H1 (cell line): ENCODE measurements at regions of chr1 and their contacts with region 1.

Region 1: GRCh38 chr1:17661546-17662157 is 93.5 kb upstream of the ACTL8 start:
- DNase-seq: peak; percentile 10 to 96
- H3K4me3 ChIP-seq: no peak overlapping the region
- H3K27ac ChIP-seq: no peak overlapping the region
- H3K4me1 ChIP-seq: peaks cover 0 to 4% (median 0%) of the 10 kb centered on the region in 4 experiments; a peak in 2 of 7 replicates
- H3K27me3 ChIP-seq: no peaks in the 10 kb centered on the region
- CTCF ChIP-seq: peak; percentile 90 to 94 (median 91)
- EP300 ChIP-seq: no peak
- POLR2A ChIP-seq: no peak
- RAD21 ChIP-seq: peak; percentile 92 to 95

Region 2: GRCh38 chr1:17393230-17393629 is 268.4 kb before region 1 on chr1:
- CTCF ChIA-PET with region 1: no interaction called
- POLR2A ChIA-PET with region 1: no interaction called
- DNase-seq: no peak
- H3K4me3 ChIP-seq: no peak overlapping the region
- H3K27ac ChIP-seq: no peak overlapping the region
- H3K4me1 ChIP-seq: no peaks in the 10 kb centered on the region
- H3K27me3 ChIP-seq: no peaks in the 10 kb centered on the region; a peak in 1 of 7 replicates
- CTCF ChIP-seq: no peak
- EP300 ChIP-seq: no peak
- POLR2A ChIP-seq: no peak
- RAD21 ChIP-seq: no peak

Region 3: GRCh38 chr1:17494114-17494729 is 167.4 kb before region 1 on chr1:
- CTCF ChIA-PET with region 1: interaction called, 11 read pairs
- POLR2A ChIA-PET with region 1: no interaction called
- DNase-seq: peak; percentile 89 to 96
- H3K4me3 ChIP-seq: no peak overlapping the region
- H3K27ac ChIP-seq: no peak overlapping the region
- H3K4me1 ChIP-seq: no peaks in the 10 kb centered on the region
- H3K27me3 ChIP-seq: no peaks in the 10 kb centered on the region
- CTCF ChIP-seq: peak; percentile 98 to 100 (median 99)
- EP300 ChIP-seq: 0 out of 3 replicates have a peak, but pooled peaks of 1 of the 2 experiments have one; percentile 40
- POLR2A ChIP-seq: no peak
- RAD21 ChIP-seq: peak; percentile 100

Region 4: DNA sequence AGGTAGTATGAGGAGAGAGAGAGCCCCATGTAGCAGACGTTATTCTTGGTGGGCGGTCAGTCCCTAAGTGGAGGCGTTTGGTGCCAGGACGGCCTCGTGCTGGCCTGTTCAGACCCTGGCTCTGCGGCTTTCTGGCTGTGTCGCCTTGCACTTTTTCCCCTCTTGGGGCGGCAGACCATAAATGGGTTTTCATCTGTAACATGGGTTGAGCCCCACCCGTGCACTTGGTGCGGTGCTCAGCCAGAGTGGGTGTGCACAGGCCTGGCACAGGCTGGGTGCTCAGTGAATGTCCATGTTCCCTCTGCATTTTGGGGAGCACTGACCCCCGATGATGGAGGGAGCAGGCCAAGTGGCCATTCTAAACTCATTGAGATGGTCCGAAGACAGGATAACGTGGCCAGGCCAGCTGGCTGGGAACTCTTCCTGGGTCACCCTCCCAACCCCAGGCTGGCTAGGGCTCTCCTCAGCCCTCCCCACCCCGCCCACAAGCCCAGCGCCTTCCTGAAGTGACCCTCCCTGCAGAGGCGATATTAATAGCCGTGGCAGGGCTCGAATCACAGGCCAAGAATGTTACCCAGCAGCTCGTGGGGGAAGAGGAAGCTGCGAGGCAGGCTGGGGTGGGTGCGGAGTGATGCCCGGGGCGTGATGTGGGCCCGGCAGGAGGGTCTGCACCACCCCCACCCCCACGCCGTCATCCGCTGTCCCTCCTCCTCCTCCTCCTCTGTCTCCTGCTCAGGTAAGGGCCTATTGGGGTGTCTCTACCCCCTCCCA is 43.7 kb before region 1 on chr1:
- CTCF ChIA-PET with region 1: interaction called, 11 read pairs
- POLR2A ChIA-PET with region 1: no interaction called
- DNase-seq: no peak
- H3K4me3 ChIP-seq: no peak overlapping the region
- H3K27ac ChIP-seq: no peak overlapping the region
- H3K4me1 ChIP-seq: no peaks in the 10 kb centered on the region
- H3K27me3 ChIP-seq: no peaks in the 10 kb centered on the region
- CTCF ChIP-seq: peak in 1 of 3 experiments; percentile 1; a peak in 1 of 4 replicates
- EP300 ChIP-seq: no peak
- POLR2A ChIP-seq: no peak
- RAD21 ChIP-seq: no peak

Region 5: GRCh38 chr1:17671741-17672140 is 10.1 kb after region 1 on chr1:
- CTCF ChIA-PET with region 1: interaction called, 20 read pairs
- POLR2A ChIA-PET with region 1: interaction called, 5 read pairs
- DNase-seq: peak in 1 of 2 experiments; percentile 61
- H3K4me3 ChIP-seq: no peak overlapping the region
- H3K27ac ChIP-seq: no peak overlapping the region
- H3K4me1 ChIP-seq: peaks cover 0 to 15% (median 7%) of the 10 kb centered on the region in 4 experiments; a peak in 5 of 7 replicates
- H3K27me3 ChIP-seq: no peaks in the 10 kb centered on the region
- CTCF ChIP-seq: peak in 2 of 3 experiments; percentile 9 to 30; a peak in 1 of 4 replicates
- EP300 ChIP-seq: no peak
- POLR2A ChIP-seq: no peak
- RAD21 ChIP-seq: no peak

Region 6: DNA sequence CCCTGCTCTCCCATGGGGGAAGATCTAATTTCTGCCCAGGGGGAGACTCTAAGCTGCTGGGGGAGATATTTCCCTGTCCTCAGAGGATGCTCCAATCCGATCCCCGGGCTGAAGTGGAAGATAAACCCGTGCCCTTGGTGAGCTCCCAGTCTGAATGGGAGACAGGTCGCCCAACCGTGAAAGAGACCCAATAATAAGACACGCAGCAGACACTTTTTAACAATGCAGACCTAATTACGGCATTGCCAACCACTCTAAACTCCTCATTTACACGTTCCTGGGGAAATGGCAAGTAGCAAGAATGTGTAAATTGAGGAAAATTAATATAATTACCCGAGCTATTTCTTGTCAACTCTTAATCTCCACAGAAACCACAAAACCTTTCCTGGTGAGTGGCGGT is 44.8 kb after region 1 on chr1:
- CTCF ChIA-PET with region 1: interaction called, 11 read pairs
- POLR2A ChIA-PET with region 1: no interaction called
- DNase-seq: no peak
- H3K4me3 ChIP-seq: no peak overlapping the region
- H3K27ac ChIP-seq: no peak overlapping the region
- H3K4me1 ChIP-seq: no peaks in the 10 kb centered on the region
- H3K27me3 ChIP-seq: peaks cover 0 to 2% (median 0%) of the 10 kb centered on the region in 4 experiments; a peak in 2 of 7 replicates
- CTCF ChIP-seq: no peak
- EP300 ChIP-seq: no peak
- POLR2A ChIP-seq: no peak
- RAD21 ChIP-seq: no peak

Region 7: DNA sequence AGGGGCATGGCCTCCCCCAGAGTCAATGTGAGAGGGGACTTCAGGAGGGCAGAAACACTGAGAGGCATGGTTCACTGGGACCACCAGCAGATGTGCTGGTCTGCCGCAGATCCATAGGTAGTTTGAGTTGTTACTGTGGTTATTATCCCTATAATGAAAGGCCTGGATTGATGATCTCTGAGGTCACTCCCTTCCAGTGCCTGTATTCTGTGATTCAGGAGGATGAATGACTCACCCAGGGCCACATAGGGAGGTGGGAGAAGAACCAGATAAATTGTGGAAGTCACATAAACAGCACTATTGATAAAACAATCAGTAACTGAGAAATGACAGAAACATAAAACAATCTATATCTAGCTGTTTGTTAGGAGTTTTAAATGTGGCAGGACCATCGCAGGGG is 70.8 kb after region 1 on chr1:
- CTCF ChIA-PET with region 1: interaction called, 16 read pairs
- POLR2A ChIA-PET with region 1: no interaction called
- DNase-seq: no peak
- H3K4me3 ChIP-seq: no peak overlapping the region
- H3K27ac ChIP-seq: no peak overlapping the region
- H3K4me1 ChIP-seq: peaks cover 0 to 7% (median 1%) of the 10 kb centered on the region in 4 experiments; a peak in 5 of 7 replicates
- H3K27me3 ChIP-seq: no peaks in the 10 kb centered on the region
- CTCF ChIP-seq: no peak
- EP300 ChIP-seq: no peak
- POLR2A ChIP-seq: no peak
- RAD21 ChIP-seq: no peak

Region 8: GRCh38 chr1:17776426-17776825 is 114.8 kb after region 1 on chr1:
- CTCF ChIA-PET with region 1: interaction called, 38 read pairs
- POLR2A ChIA-PET with region 1: no interaction called
- DNase-seq: no peak
- H3K4me3 ChIP-seq: no peak overlapping the region
- H3K27ac ChIP-seq: no peak overlapping the region
- H3K4me1 ChIP-seq: no peaks in the 10 kb centered on the region; a peak in 2 of 7 replicates
- H3K27me3 ChIP-seq: no peaks in the 10 kb centered on the region
- CTCF ChIP-seq: no peak
- EP300 ChIP-seq: no peak
- POLR2A ChIP-seq: no peak
- RAD21 ChIP-seq: no peak